Right ventricle myocardium inferior (tissue), 1 donor: ENCODE measurements at regions of chr12 and their contacts with region 1.

Region 1: DNA sequence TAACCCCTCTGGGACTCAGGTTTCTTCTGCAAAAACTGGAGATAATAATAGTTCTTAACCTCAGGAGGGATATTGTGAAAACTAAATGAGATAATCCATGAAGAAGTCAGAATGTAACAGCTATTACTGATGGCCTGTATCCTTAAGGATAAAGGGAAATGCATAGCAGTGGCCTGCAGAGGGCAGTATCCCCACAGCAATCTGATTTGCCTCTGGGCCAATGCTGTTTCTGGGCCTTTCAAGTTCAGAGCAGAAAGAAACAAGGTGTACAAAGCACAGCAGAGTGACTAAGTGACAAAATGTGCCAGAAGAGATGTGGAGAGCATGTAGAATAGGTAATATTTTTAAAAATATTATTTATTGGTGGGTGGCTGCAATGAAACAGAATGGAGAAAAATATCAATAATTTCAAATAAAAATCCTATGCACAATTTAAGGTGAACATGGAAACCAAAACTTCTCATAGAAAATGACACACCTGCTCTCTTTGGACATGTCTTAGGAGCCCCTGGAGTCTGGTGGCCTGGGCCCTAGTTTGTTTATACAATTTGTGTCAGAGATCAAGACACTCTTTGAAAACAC is 90.3 kb downstream of the C12orf75 start:
- DNase-seq: no peak
- ATAC-seq: peak; percentile 86

Region 2: GRCh38 chr12:103705927-103706326 is 1714.8 kb before region 1 on chr12:
- intact Hi-C with region 1: no loop called
- DNase-seq: no peak
- ATAC-seq: no peak

Region 3: DNA sequence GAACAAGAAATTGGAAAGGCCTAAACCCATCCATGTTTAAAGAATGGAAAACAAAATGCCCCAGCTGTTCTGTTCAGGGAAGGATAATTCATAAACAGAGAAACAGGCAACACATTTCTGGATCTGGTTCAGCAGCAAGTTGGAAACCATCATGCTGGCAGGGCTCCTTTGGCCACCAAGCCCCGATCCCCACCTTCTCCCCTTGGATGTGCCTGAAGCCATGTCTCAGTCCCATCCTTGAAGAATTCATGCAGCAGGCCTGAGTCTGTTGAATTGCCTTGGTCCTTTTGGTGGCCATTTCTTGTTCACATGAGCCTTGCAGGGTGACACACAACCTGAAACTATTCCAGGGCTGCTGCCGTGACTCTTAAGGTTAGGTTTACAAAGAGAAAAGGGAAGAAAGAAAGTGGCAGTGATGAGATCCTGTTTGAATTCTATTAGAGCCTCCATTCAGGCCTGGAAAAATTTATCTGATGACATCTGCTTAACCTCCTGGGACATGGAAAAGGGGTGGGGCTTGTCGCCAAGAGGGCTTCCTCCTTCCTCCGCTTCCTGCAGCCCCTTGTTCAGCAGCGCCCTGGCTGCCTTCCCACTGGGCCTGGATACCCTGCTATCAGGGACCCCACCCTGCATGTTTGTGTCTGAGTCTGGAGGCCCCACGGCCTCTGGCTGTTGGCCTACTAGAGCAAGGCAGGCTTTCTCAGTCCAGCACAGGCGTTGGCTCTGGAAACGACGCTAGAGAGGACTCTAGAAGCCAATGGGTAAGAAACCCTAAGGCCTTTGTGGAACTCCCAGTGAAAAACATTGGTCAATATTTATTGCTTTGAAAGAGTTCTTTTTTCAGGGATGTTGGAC is 251.6 kb after region 1 on chr12:
- intact Hi-C with region 1: loop called (anchors 10 kb)
- DNase-seq: peak; percentile 89
- ATAC-seq: peak; percentile 87

Region 4: DNA sequence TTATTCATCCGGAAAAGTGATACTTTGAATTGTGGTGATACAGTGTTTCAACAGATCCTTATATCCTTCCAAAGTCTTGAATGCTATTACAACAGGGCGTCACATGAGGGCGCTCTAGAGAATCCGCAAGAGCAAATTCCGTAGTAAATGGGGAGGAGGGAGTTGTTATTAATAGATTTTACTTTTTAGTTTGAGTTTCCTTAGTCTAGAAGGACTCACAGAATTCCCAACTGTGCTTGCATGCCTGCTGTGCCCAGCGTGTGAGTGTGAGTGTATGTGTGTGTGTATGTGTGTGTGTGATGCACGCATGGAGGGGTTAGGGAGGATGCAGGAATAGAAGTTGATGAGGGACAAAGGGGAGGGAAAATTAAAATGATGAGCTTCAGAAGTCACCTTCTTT is 285.0 kb after region 1 on chr12:
- intact Hi-C with region 1: loop called (anchors 5 kb)
- DNase-seq: no peak
- ATAC-seq: peak; percentile 48

Region 5: GRCh38 chr12:106205208-106206071 is 784.7 kb after region 1 on chr12:
- intact Hi-C with region 1: loop called (anchors 2 kb)
- DNase-seq: peak; percentile 76
- ATAC-seq: peak; percentile 99

Region 6: GRCh38 chr12:106223485-106224354 is 803.0 kb after region 1 on chr12:
- intact Hi-C with region 1: loop called (anchors 2 kb)
- DNase-seq: peak; percentile 79
- ATAC-seq: peak; percentile 87